Lower leg skin (tissue), 4 donors: ENCODE measurements at regions of chr7 and their contacts with region 1.

Region 1: DNA sequence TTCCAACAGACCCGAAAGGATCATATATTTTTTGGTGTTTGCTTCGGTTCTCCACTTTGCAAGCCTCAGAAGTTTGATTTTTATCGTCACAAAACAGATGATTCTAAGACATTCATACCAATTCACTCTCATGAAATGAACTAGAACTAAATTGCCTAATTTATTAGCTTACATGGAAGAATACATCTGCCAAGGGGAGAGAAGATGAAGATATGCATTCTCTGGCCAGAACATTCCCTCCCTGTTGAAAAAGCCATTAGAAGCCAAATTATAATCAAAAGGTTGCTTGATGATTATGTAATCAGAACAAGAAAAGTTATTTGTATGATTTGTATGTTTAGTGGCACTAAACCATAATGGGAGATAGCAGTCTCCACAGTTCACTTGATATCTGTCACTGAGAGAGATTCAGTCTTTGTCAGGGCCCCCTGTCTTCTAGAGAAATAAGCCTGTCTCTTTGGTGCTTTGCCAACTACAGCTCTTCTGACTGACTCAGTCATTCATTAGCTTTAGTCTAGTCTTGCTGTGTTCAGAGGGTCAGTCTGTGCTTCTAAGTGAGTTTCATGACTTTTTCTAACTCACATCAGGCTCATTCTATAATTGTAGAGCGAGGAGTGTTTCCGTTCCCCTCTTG is 95.3 kb upstream of the GNAI1 start:
- DNase-seq: no peak
- H3K4me3 ChIP-seq: no peak overlapping the region
- CTCF ChIP-seq: no peak
- POLR2A ChIP-seq: no peak

Region 2: GRCh38 chr7:78769481-78770101 is 1269.8 kb before region 1 on chr7:
- intact Hi-C with region 1: loop called (anchors 10 kb)
- DNase-seq: no peak
- H3K4me3 ChIP-seq: no peak overlapping the region
- CTCF ChIP-seq: no peak
- POLR2A ChIP-seq: no peak